Activated CD4-positive, alpha-beta T cell treated with anti-CD3 and anti-CD28 coated beads, Interleukin-2, amount 10 ng/mL, durations not matched to agents 24 days and 14 days (primary cell): ENCODE measurements at regions of chr2 and their contacts with region 1.

Region 1: GRCh38 chr2:70919672-70920366 is 15.9 kb upstream of the ATP6V1B1 start:
- DNase-seq: peak; percentile 93
- H3K4me3 Mint-ChIP-seq: no peak overlapping the region
- H3K27ac Mint-ChIP-seq: no peak overlapping the region
- H3K4me1 Mint-ChIP-seq: peaks cover 2% of the 10 kb centered on the region
- H3K27me3 Mint-ChIP-seq: peaks cover 28% of the 10 kb centered on the region

Region 2: GRCh38 chr2:70871398-70872211 is 48.2 kb before region 1 on chr2:
- intact Hi-C with region 1: loop called (anchors 1 kb)
- DNase-seq: peak; percentile 94
- H3K4me3 Mint-ChIP-seq: peak overlapping the region; percentile 49
- H3K27ac Mint-ChIP-seq: no peak overlapping the region
- H3K4me1 Mint-ChIP-seq: peaks cover 6% of the 10 kb centered on the region
- H3K27me3 Mint-ChIP-seq: peaks cover 28% of the 10 kb centered on the region